Naive thymus-derived CD8-positive, alpha-beta T cell (primary cell): ENCODE measurements at regions of chr1 and their contacts with region 1.

Region 1: DNA sequence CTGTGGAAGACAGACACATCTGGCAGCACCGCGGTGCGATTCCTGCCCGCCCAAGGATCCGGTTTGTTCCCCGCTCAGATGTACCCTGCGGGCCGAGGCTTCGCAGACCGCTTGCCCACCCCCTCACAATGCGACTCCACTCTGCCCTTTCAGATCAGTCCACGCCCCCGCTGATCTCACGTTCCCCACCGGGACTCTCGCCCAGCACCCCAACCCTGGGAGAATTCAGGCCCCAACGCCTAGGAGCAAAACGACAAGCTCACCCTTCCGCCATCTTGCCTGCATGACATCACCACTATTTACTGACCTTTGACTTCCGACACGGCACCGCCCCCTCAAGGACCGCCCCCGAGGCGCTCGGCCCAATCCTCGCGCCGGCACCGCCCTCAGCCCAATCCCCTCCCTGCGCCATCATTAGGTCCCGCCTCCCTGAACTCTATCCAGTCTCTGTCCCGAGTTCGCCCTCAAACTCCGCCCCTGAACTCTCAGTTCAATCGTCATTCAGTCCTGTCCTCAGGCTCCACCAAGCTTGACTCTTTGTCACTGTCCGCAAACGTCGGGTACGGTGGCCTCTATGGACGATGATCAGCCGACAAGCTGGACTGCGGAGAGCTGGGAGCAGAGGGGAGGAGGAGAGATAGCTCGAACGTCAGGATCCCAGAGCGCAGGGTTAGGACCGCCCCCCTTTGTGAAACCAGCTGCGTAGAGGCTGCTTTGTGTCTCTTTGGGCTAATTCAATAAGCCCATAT is at the start of gene BSDC1:
- DNase-seq: peak; percentile 95 to 99 (median 98)
- ATAC-seq: peak; percentile 95 to 96
- H3K4me3 Mint-ChIP-seq: peak within 1 kb of the TSS; percentile 91 to 100 (median 100)
- H3K27ac Mint-ChIP-seq: peak within 1 kb of the TSS; percentile 98 to 100 (median 100)
- H3K4me1 Mint-ChIP-seq: peaks cover 15 to 32% (median 30%) of the 10 kb centered on the region in 4 donors
- H3K27me3 Mint-ChIP-seq: no peaks in the 10 kb centered on the region
- polyA plus RNA-seq, gene BSDC1: 29.5 to 39.6 (median 31.1) TPM

Region 2: DNA sequence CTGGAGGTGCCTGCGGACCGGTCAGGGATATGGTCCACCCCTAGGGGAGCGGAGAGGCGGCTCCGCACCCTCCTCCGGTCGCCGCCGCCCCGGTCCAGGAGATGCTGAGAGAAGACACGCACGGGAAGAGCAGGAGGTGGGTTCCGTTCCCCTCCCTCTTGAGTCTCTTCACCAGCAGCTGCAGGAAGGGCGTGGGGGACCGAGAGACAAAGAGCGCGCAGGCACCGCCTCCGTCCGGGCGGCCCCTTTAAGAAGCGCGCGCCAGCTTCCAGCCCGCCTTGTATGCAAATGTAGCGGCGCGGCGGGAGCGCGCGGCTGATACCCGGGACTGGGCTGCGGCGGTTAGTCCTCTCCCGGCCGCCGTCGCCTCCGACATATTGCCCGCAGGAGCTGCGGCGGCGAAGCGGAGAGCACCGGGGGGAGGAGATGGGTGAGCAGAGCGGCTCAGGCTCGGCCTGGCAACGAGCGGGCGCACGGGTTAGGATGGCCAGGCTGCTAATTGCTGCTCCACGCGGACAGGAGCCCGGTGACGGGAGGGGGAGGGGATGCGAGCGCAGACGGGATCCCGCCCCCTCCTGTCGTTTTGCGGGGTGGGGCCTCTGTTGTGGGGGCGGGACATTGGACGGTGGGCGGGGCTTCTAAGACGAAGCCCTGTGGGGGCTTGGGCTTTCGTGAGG is 321.6 kb before region 1 on chr1 and contains the start of gene TMEM39B:
- POLR2A ChIA-PET with region 1: interaction called, 10 read pairs
- DNase-seq: peak; percentile 89 to 98 (median 92)
- ATAC-seq: peak; percentile 84 to 86
- H3K4me3 Mint-ChIP-seq: peak within 1 kb of the TSS; percentile 87 to 99 (median 95)
- H3K27ac Mint-ChIP-seq: peak within 1 kb of the TSS; percentile 74 to 98 (median 94)
- H3K4me1 Mint-ChIP-seq: peaks cover 29 to 45% (median 34%) of the 10 kb centered on the region in 4 donors
- H3K27me3 Mint-ChIP-seq: no peaks in the 10 kb centered on the region
- polyA plus RNA-seq, gene TMEM39B: 2.4 to 4.8 (median 4.5) TPM

Region 3: DNA sequence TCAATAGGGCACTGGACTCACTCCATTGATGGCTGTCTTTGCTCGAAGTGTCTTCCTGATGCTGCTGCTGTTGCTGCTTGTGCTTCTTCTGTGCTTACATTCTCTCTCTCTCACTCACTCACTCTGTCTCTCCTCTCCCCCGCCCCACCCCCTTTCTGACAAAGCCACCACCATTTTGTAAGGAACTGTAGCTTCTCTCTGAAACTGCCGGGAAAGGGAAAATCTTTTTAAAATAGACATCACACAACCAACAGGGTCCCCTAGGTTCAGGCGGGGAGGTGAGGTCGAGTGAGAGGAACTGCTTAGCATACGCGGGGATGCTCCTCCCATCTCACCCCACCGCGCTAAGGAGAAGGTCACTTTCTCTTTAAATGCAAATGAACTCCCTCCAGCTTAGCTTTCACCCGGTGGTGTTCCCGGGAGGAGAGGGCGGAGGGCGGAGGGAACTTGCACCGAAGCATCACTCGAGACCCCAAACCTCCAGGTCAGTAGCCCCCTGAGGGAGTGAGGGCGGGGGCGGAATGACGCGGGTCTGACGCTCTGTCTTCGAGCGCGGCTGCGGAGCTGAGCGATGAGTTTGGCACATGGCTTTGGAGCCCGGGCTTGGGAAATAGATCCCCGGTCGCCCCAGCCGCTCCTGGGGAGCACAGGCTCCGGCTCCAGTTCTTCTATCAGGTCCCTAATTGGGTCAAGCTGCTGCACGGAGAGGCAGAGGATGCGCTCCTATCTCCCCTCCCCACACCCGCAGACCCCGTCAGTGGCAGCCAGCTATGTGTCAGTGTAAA is 193.9 kb before region 1 on chr1 and contains the start of gene CCDC28B:
- POLR2A ChIA-PET with region 1: interaction called, 11 read pairs
- DNase-seq: peak; percentile 34 to 74 (median 63)
- ATAC-seq: peak; percentile 54 to 56
- H3K4me3 Mint-ChIP-seq: peak within 1 kb of the TSS; percentile 86 to 97 (median 95)
- H3K27ac Mint-ChIP-seq: peak within 1 kb of the TSS; percentile 89 to 98 (median 94)
- H3K4me1 Mint-ChIP-seq: peaks cover 35 to 60% (median 59%) of the 10 kb centered on the region in 4 donors
- H3K27me3 Mint-ChIP-seq: no peaks in the 10 kb centered on the region
- polyA plus RNA-seq, gene CCDC28B: 15.4 to 17.3 (median 16.3) TPM

Region 4: GRCh38 chr1:32247983-32248889 is 146.1 kb before region 1 on chr1:
- POLR2A ChIA-PET with region 1: interaction called, 14 read pairs
- DNase-seq: peak; percentile 45 to 82 (median 62)
- ATAC-seq: peak in 1 of 2 donors; percentile 3
- H3K4me3 Mint-ChIP-seq: peak overlapping the region; percentile 63 to 100 (median 84)
- H3K27ac Mint-ChIP-seq: peak overlapping the region; percentile 94 to 99 (median 98)
- H3K4me1 Mint-ChIP-seq: peaks cover 29 to 72% (median 52%) of the 10 kb centered on the region in 4 donors
- H3K27me3 Mint-ChIP-seq: peaks cover 0 to 1% (median 0%) of the 10 kb centered on the region in 5 donors

Region 5: GRCh38 chr1:32650752-32651460 is 256.6 kb after region 1 on chr1 and contains the start of gene RBBP4:
- POLR2A ChIA-PET with region 1: interaction called, 10 read pairs
- DNase-seq: peak; percentile 97 to 99 (median 98)
- ATAC-seq: peak; percentile 83 to 85
- H3K4me3 Mint-ChIP-seq: peak within 1 kb of the TSS; percentile 81 to 99 (median 96)
- H3K27ac Mint-ChIP-seq: peak within 1 kb of the TSS; percentile 97 to 100 (median 100)
- H3K4me1 Mint-ChIP-seq: peaks cover 21 to 71% (median 63%) of the 10 kb centered on the region in 4 donors
- H3K27me3 Mint-ChIP-seq: no peaks in the 10 kb centered on the region
- polyA plus RNA-seq, gene RBBP4: 226 to 251 (median 231) TPM